ENCODE measurements at regions of chr12 and their contacts with region 1.

Region 1: DNA sequence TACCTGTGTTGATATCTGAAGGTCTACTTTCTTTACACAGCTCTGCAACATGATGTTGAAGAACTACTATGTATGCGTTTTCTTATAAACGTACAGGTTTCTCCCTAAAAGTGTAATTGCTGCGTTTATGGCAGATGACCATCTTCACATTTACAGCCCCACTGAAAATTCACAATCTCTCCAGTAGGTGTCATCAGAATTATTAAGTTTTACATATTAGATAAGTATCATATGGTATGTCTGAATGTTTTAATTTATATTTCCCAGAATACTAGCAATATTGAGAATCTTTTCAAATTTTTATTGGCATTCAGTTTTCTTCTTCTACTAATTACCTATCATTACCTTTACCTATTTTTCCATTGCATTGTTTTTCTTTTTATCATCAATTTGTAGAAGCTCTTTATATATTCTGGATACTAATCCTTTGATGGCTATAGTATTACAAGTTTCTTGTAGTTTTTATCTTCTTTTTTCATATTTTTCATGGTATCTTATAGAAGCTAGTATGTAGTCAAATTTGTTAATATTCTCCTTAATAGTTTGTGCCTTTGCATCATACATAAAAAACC is 123.5 kb downstream of the CAPZA3 start:
- DNase-seq: peak; percentile 62
- H3K4me3 ChIP-seq: no peak overlapping the region
- H3K27ac ChIP-seq: no peak overlapping the region
- H3K4me1 ChIP-seq: no peaks in the 10 kb centered on the region
- H3K27me3 ChIP-seq: no peaks in the 10 kb centered on the region
- CTCF ChIP-seq: peak; percentile 64

Region 2: GRCh38 chr12:18919871-18920511 is 58.6 kb after region 1 on chr12:
- CTCF ChIA-PET with region 1: no interaction called
- POLR2A ChIA-PET with region 1: no interaction called
- intact Hi-C with region 1: no loop called
- DNase-seq: no peak
- H3K4me3 ChIP-seq: no peak overlapping the region
- H3K27ac ChIP-seq: no peak overlapping the region
- H3K4me1 ChIP-seq: no peaks in the 10 kb centered on the region
- H3K27me3 ChIP-seq: no peaks in the 10 kb centered on the region
- CTCF ChIP-seq: no peak

Region 3: DNA sequence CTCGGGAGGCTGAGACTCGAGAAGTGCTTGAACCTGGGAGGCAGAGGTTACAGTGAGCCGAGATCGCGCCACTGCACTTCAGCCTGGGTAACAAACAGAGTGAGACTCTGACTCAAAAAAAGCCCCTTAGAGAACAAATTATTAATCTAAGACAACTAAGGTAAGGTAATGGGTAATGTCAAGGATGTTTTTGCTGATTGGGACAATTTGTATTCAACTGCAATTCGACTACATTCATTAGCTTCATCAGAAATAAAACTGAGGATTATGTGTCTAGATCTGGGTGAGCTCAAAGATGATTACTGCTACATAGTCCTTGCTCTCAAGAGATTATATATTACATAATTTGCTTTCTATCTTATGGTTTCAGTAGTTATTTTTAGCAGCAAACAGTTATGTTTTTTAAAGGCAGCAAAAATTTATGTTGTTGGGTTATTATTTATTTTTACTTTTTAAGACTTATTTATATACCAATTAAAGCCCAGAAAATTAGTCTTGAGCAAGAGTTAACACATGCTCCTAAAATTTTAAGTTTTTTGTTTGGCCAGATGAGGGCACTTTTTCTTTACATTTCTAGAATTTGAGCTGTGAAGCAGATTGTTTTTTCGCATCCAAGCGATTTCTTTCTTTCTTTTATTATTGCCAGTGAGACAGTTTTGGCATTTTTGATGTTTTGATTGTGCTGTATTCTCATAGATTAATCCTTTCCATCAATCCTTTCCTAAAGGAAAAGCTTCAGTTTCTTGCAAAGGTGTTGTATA is 320.5 kb after region 1 on chr12:
- CTCF ChIA-PET with region 1: no interaction called
- POLR2A ChIA-PET with region 1: no interaction called
- intact Hi-C with region 1: loop called (anchors 2 kb)
- DNase-seq: peak; percentile 42
- H3K4me3 ChIP-seq: no peak overlapping the region
- H3K27ac ChIP-seq: no peak overlapping the region
- H3K4me1 ChIP-seq: peaks cover 30% of the 10 kb centered on the region
- H3K27me3 ChIP-seq: no peaks in the 10 kb centered on the region
- CTCF ChIP-seq: peak; percentile 60

Region 4: GRCh38 chr12:19288603-19289244 is 427.4 kb after region 1 on chr12:
- CTCF ChIA-PET with region 1: no interaction called
- POLR2A ChIA-PET with region 1: no interaction called
- intact Hi-C with region 1: loop called (anchors 10 kb)
- DNase-seq: peak; percentile 66
- H3K4me3 ChIP-seq: no peak overlapping the region
- H3K27ac ChIP-seq: no peak overlapping the region
- H3K4me1 ChIP-seq: no peaks in the 10 kb centered on the region
- H3K27me3 ChIP-seq: no peaks in the 10 kb centered on the region
- CTCF ChIP-seq: peak; percentile 74

Measured in A673 (cell line).